Ascending aorta (tissue), 2 donors: ENCODE measurements at regions of chr10 and their contacts with region 1.

Region 1: GRCh38 chr10:24518981-24519597 is 204.6 kb downstream of the ARHGAP21 start:
- DNase-seq: peak in 1 of 2 donors; percentile 74
- H3K4me3 ChIP-seq: peak overlapping the region in 1 of 2 donors; percentile 31
- H3K27ac ChIP-seq: no peak overlapping the region
- H3K4me1 ChIP-seq: no peaks in the 10 kb centered on the region
- H3K27me3 ChIP-seq: no peaks in the 10 kb centered on the region
- CTCF ChIP-seq: peak; percentile 22 to 86 (median 71)

Region 2: DNA sequence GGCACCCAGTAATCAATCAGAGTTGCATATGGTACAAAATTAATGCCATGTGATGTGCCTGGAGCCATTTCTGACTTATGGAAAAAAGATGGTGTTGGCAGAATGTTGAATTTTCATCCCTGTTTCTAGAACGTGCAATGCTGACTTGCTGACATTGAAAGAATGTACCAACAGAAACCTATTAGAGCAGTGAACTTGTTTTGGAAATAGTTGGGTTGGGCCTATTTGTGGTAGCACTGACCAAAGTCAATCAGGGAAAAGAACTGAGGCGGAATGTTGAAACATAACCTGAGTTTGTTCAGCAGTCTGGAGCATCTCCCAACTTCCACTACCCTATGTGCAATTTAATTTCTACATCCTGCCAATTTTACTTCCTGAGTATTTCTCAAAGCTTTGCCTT is 321.8 kb before region 1 on chr10:
- intact Hi-C with region 1: loop called (anchors 10 kb)
- DNase-seq: no peak
- H3K4me3 ChIP-seq: no peak overlapping the region
- H3K27ac ChIP-seq: no peak overlapping the region
- H3K4me1 ChIP-seq: no peaks in the 10 kb centered on the region
- H3K27me3 ChIP-seq: no peaks in the 10 kb centered on the region
- CTCF ChIP-seq: no peak

Region 3: GRCh38 chr10:24360282-24361127 is 158.6 kb before region 1 on chr10:
- intact Hi-C with region 1: loop called (anchors 5 kb)
- DNase-seq: peak in 1 of 2 donors; percentile 76
- H3K4me3 ChIP-seq: no peak overlapping the region
- H3K27ac ChIP-seq: no peak overlapping the region
- H3K4me1 ChIP-seq: peaks cover 0 to 2% of the 10 kb centered on the region in 2 donors
- H3K27me3 ChIP-seq: no peaks in the 10 kb centered on the region
- CTCF ChIP-seq: peak; percentile 45 to 75 (median 75)

Region 4: GRCh38 chr10:24756283-24756682 is 237.2 kb after region 1 on chr10:
- intact Hi-C with region 1: no loop called
- DNase-seq: no peak
- H3K4me3 ChIP-seq: no peak overlapping the region
- H3K27ac ChIP-seq: no peak overlapping the region
- H3K4me1 ChIP-seq: no peaks in the 10 kb centered on the region
- H3K27me3 ChIP-seq: no peaks in the 10 kb centered on the region
- CTCF ChIP-seq: no peak